Sigmoid colon (tissue), 7 donors: ENCODE measurements at regions of chr11 and their contacts with region 1.

Region 1: GRCh38 chr11:62372871-62373270 is 35.6 kb downstream of the ASRGL1 start:
- DNase-seq: no peak
- H3K4me3 ChIP-seq: no peak overlapping the region
- H3K27ac ChIP-seq: no peak overlapping the region
- H3K4me1 ChIP-seq: no peaks in the 10 kb centered on the region
- H3K27me3 ChIP-seq: no peaks in the 10 kb centered on the region
- CTCF ChIP-seq: no peak
- EP300 ChIP-seq: no peak
- POLR2A ChIP-seq: no peak

Region 2: DNA sequence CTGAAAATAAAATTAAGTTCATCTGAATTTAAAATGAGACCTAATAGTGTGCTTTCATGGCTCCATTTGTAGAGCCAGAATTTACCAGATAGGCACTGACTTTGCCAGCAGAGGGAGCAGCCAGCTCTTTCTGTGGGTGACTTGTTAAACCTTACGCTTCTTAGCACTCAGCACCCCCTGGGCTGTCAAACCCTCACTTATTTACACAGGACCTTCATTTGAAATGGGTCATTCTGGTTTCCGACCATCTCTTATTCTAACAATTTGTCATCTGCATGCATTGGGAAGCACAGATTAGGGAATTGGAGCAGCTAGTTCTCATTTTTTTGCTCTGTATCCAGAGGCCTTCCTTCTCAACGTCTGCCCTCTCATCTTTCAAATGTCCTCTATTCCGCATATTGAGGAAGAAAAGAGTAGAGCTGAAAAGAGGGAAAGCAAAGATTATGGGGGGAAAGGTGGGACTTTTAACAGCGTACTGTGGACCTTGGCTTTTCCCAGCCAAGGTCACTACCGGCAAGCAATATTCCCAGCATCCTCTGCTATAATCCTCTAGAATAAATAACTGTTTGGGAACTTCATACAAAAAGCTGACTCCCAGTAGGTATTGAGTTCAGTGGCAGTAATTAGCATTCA is 32.5 kb before region 1 on chr11:
- intact Hi-C with region 1: loop called (anchors 2 kb)
- DNase-seq: peak; percentile 69
- H3K4me3 ChIP-seq: no peak overlapping the region
- H3K27ac ChIP-seq: no peak overlapping the region
- H3K4me1 ChIP-seq: peaks cover 0 to 16% (median 7%) of the 10 kb centered on the region in 4 donors
- H3K27me3 ChIP-seq: no peaks in the 10 kb centered on the region
- CTCF ChIP-seq: peak; percentile 24 to 60 (median 50)
- EP300 ChIP-seq: no peak
- POLR2A ChIP-seq: no peak

Region 3: GRCh38 chr11:62353844-62354243 is 19.0 kb before region 1 on chr11:
- intact Hi-C with region 1: no loop called
- DNase-seq: no peak
- H3K4me3 ChIP-seq: no peak overlapping the region
- H3K27ac ChIP-seq: no peak overlapping the region
- H3K4me1 ChIP-seq: no peaks in the 10 kb centered on the region
- H3K27me3 ChIP-seq: no peaks in the 10 kb centered on the region
- CTCF ChIP-seq: no peak
- EP300 ChIP-seq: no peak
- POLR2A ChIP-seq: no peak